CD4-positive, alpha-beta T cell (primary cell): ENCODE measurements at regions of chr3 and their contacts with region 1.

Region 1: DNA sequence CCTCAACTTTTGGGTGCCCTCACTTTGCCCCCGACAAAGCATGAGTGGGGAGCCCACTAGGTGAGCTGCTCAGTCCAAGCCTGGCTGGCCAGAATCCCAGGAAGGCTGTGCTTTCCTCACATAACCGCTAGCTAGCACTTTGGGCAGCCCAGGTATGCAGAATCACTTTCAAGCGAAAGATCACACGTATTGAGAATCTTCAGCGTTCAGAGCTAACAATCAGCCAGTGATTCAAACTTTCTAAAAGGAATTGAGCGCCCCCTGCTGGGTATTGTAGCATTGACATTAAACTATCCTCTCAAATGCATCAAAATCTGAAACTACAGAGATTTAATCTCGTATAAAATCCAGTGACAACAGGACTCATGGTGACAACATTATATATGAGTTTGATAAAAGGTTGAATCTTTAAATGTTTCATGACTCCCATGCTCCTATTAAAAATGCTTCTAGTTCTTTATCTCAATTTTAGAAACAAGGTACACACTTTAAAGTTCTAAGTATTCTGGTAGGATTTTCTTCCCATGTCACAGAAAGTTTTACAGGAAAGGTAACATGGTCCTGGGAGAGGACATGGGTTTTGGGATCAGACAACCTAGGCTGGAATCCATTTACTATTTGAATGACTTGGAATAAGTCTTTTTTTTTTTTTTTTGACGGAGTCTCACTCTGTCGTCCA is 11.8 kb downstream of the ANAPC13 start:
- DNase-seq: peak; percentile 45 to 89 (median 72)
- ATAC-seq: peak; percentile 85
- H3K4me3 ChIP-seq: no peak overlapping the region
- H3K4me3 Mint-ChIP-seq: no peak overlapping the region
- H3K27ac ChIP-seq: no peak overlapping the region
- H3K27ac Mint-ChIP-seq: no peak overlapping the region
- H3K4me1 ChIP-seq: peaks cover 4% of the 10 kb centered on the region
- H3K4me1 Mint-ChIP-seq: peaks cover 7% of the 10 kb centered on the region
- H3K27me3 ChIP-seq: no peaks in the 10 kb centered on the region
- H3K27me3 Mint-ChIP-seq: no peaks in the 10 kb centered on the region
- CTCF ChIP-seq: peak; percentile 92

Region 2: GRCh38 chr3:133812872-133813271 is 661.1 kb before region 1 on chr3:
- CTCF ChIA-PET with region 1: no interaction called
- POLR2A ChIA-PET with region 1: no interaction called
- intact Hi-C with region 1: loop called (anchors 5 to 10 kb)
- DNase-seq: no peak
- ATAC-seq: no peak
- H3K4me3 ChIP-seq: no peak overlapping the region
- H3K4me3 Mint-ChIP-seq: no peak overlapping the region
- H3K27ac ChIP-seq: no peak overlapping the region
- H3K27ac Mint-ChIP-seq: no peak overlapping the region
- H3K4me1 ChIP-seq: no peaks in the 10 kb centered on the region
- H3K4me1 Mint-ChIP-seq: peaks cover 39% of the 10 kb centered on the region
- H3K27me3 ChIP-seq: no peaks in the 10 kb centered on the region
- H3K27me3 Mint-ChIP-seq: no peaks in the 10 kb centered on the region
- CTCF ChIP-seq: no peak

Region 3: DNA sequence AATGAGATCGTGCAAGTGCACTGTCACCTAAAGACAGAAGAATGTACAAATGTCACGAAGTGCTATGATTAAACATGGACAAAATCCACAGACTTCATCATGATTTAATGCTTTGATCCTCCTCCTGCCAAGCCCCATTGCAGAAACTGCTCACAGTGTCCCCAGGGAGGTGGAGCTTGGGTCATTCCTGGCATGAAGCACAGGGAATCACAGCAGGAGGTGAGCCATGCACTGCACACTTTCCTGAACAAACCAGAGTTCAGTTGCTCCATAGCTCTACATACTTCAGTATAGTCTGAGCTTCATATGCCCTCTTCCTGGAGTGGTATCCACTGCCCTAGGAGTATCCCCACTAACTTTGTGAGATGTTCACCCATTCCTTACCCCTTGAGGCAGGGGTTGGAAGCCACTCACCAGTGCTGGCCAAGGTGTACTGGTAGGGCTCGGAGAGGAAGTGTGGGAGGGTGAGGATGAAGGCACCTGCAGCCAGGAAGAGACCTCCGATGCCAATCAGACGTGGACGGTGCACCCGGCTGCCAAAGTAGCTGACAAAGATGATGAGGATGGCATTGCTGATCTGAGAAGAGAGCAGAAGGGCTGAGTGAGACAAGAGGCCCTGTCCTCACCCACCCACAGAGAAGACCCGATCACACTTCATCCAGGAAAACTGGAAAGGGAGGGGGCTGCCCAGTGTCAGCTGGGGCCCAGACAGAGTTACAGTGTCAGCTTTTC is 500.6 kb before region 1 on chr3:
- CTCF ChIA-PET with region 1: no interaction called
- POLR2A ChIA-PET with region 1: no interaction called
- intact Hi-C with region 1: no loop called
- DNase-seq: no peak
- ATAC-seq: no peak
- H3K4me3 ChIP-seq: no peak overlapping the region
- H3K4me3 Mint-ChIP-seq: no peak overlapping the region
- H3K27ac ChIP-seq: no peak overlapping the region
- H3K27ac Mint-ChIP-seq: no peak overlapping the region
- H3K4me1 ChIP-seq: no peaks in the 10 kb centered on the region
- H3K4me1 Mint-ChIP-seq: no peaks in the 10 kb centered on the region
- H3K27me3 ChIP-seq: no peaks in the 10 kb centered on the region
- H3K27me3 Mint-ChIP-seq: no peaks in the 10 kb centered on the region
- CTCF ChIP-seq: no peak

Region 4: GRCh38 chr3:134197681-134198261 is 276.2 kb before region 1 on chr3:
- CTCF ChIA-PET with region 1: interaction called, 6 read pairs
- POLR2A ChIA-PET with region 1: no interaction called
- intact Hi-C with region 1: loop called (anchors 1 to 5 kb)
- DNase-seq: peak in 3 of 14 experiments; percentile 53 to 64 (median 63)
- ATAC-seq: peak; percentile 77
- H3K4me3 ChIP-seq: no peak overlapping the region
- H3K4me3 Mint-ChIP-seq: no peak overlapping the region
- H3K27ac ChIP-seq: no peak overlapping the region
- H3K27ac Mint-ChIP-seq: no peak overlapping the region
- H3K4me1 ChIP-seq: no peaks in the 10 kb centered on the region
- H3K4me1 Mint-ChIP-seq: peaks cover 6% of the 10 kb centered on the region
- H3K27me3 ChIP-seq: no peaks in the 10 kb centered on the region
- H3K27me3 Mint-ChIP-seq: no peaks in the 10 kb centered on the region
- CTCF ChIP-seq: peak; percentile 78

Region 5: DNA sequence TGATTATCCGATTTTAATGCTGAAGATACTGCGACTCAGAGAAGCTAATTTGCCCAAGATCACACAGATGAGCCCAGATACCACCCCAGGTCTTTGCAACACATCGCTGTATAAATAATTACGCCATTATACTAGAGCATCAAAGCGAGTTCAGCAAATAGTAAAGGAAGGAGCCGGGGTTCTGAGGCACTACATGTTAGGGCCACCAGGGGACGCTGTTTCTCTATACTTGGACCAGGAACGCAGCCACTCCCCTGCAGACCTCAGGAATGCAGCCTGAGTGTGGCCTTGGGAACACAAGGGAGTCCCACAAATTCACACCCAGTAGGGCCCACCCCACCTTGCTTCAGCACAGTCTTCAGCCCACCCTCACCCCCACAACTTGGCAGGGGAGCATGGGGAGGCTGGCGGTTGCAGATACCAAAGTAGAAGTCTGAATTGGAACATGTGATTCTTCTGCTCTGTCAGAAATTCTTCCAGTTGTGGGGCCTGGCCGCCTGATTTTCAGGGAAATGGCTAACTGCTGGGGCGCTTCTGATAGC is 165.6 kb before region 1 on chr3:
- CTCF ChIA-PET with region 1: interaction called, 12 read pairs
- POLR2A ChIA-PET with region 1: no interaction called
- intact Hi-C with region 1: loop called (anchors 1 kb)
- DNase-seq: peak; percentile 53 to 86 (median 71)
- ATAC-seq: peak; percentile 96
- H3K4me3 ChIP-seq: no peak overlapping the region
- H3K4me3 Mint-ChIP-seq: no peak overlapping the region
- H3K27ac ChIP-seq: no peak overlapping the region
- H3K27ac Mint-ChIP-seq: no peak overlapping the region
- H3K4me1 ChIP-seq: peaks cover 14% of the 10 kb centered on the region
- H3K4me1 Mint-ChIP-seq: peaks cover 5% of the 10 kb centered on the region
- H3K27me3 ChIP-seq: peaks cover 8 to 12% of the 10 kb centered on the region in 2 experiments
- H3K27me3 Mint-ChIP-seq: peaks cover 35% of the 10 kb centered on the region
- CTCF ChIP-seq: peak; percentile 98

Region 6: DNA sequence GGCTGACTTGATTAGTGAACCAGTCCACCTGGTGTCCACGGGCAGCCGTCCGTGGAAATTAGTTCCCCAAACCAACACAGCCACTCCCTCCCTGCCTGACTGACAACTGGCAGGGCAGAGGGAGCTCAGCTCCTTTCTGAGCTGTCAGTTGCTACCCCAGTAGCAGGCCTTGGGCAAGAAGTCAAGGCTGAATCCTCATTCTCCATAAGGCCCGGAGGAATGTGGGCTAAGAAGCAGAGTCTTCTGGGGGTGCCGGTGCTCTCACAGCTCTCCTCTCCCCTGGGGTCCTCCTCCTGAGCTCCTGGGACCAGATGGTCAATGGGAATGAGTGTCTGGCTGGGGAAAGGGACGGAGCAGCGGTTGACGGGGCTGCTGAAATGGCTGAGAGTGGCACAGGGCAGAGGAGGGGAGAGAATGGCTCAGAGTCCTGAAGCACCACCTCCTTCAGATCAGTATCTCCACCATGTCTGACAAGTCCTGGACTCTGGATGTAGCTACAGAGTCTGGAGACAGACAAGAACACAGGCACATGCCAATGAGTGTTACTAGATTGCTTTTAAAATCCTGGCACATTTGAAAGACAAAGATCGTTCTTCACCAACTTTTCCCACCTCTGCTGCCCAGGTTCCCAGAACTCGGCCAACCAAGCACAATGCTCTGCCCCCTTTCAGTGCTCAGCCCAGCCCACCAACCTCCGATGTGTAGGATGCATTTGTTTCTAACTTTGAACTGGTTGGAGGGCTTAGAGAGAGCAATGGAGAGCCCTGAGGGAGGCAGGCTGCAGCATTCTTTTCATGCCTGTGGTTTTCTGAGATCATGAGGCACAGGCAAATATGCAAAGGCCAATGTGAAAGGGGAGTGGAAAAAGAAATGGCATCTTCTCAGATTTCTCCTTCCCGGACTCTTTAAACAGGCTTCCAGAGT is 116.5 kb before region 1 on chr3:
- CTCF ChIA-PET with region 1: no interaction called
- POLR2A ChIA-PET with region 1: no interaction called
- intact Hi-C with region 1: loop called in 1 of 2 experiments (anchors 5 kb)
- DNase-seq: no peak
- ATAC-seq: no peak
- H3K4me3 ChIP-seq: no peak overlapping the region
- H3K4me3 Mint-ChIP-seq: no peak overlapping the region
- H3K27ac ChIP-seq: no peak overlapping the region
- H3K27ac Mint-ChIP-seq: no peak overlapping the region
- H3K4me1 ChIP-seq: no peaks in the 10 kb centered on the region
- H3K4me1 Mint-ChIP-seq: no peaks in the 10 kb centered on the region
- H3K27me3 ChIP-seq: no peaks in the 10 kb centered on the region
- H3K27me3 Mint-ChIP-seq: no peaks in the 10 kb centered on the region
- CTCF ChIP-seq: no peak

Region 7: DNA sequence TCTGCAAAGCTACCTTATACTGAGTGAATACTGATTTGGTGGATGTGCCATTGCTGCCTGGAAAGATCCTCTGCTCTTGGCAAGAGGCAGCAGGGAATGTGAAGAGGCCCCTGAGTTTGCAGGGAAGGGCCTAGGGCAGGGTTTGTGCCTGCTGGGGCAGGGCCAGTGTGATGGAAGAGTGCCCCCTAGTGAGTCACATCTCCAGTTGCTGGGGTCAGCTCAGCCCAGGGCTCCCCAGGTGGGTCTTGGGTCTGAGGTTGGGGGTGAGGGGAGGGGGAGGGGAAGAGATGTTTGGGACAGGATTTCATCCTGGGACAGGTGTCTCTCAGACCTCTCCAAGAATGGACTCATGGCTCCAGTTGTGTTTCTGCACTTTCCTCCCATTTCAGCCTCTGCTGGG is 95.6 kb before region 1 on chr3:
- CTCF ChIA-PET with region 1: no interaction called
- POLR2A ChIA-PET with region 1: interaction called, 3 read pairs
- intact Hi-C with region 1: loop called in 1 of 2 experiments (anchors 5 kb)
- DNase-seq: peak in 7 of 14 experiments; percentile 10 to 65 (median 49)
- ATAC-seq: no peak
- H3K4me3 ChIP-seq: no peak overlapping the region
- H3K4me3 Mint-ChIP-seq: no peak overlapping the region
- H3K27ac ChIP-seq: no peak overlapping the region
- H3K27ac Mint-ChIP-seq: no peak overlapping the region
- H3K4me1 ChIP-seq: peaks cover 15% of the 10 kb centered on the region
- H3K4me1 Mint-ChIP-seq: peaks cover 12% of the 10 kb centered on the region
- H3K27me3 ChIP-seq: peaks cover 18 to 23% of the 10 kb centered on the region in 2 experiments
- H3K27me3 Mint-ChIP-seq: peaks cover 43% of the 10 kb centered on the region
- CTCF ChIP-seq: no peak

Region 8: GRCh38 chr3:134432236-134432635 is 41.8 kb before region 1 on chr3:
- CTCF ChIA-PET with region 1: no interaction called
- POLR2A ChIA-PET with region 1: no interaction called
- intact Hi-C with region 1: no loop called
- DNase-seq: no peak
- ATAC-seq: no peak
- H3K4me3 ChIP-seq: no peak overlapping the region
- H3K4me3 Mint-ChIP-seq: no peak overlapping the region
- H3K27ac ChIP-seq: no peak overlapping the region
- H3K27ac Mint-ChIP-seq: no peak overlapping the region
- H3K4me1 ChIP-seq: no peaks in the 10 kb centered on the region
- H3K4me1 Mint-ChIP-seq: no peaks in the 10 kb centered on the region
- H3K27me3 ChIP-seq: peaks cover 2 to 10% of the 10 kb centered on the region in 2 experiments
- H3K27me3 Mint-ChIP-seq: peaks cover 34% of the 10 kb centered on the region
- CTCF ChIP-seq: no peak

Region 9: DNA sequence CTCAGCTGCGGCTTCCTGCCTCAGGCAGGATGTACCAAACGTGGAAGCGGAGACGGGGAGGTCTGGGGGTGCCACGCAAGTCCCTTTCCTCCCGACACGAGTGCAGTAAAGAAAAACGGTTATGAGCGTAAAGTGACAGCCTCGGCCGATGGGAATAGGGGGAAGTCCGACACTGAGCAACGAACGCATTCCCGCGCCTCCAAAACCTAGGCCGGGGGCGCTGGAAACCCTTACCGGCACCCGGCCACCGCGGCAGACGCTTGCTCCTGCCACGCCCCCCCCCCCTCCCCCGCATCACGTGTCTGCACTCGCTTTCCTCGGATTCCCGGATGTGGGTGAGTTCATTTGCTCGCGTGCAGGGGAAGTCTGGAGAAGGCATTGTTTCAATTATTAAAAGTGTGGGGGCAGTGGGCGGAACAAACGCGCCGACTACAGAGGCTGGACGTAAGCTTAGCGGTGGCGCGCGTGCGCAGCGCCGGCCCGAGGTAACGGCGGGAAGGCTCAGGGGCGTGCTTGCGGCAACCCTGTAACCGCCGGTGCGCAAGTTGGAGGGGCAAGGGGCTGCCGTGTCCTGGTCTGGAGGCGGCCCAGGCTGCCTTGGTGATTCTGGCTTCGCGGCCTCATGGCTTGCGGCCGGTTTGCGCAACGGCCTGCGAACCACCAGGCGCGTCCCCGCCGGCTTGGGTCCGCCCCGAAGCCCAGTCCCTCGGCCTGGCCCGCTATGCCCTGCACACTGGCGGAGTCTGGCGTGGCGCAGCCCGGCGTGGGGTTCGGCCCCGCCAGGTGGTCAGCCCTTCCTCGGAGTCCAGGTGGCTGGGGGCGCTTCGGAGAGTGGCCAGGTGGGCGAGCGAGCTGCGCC is 11.9 kb after region 1 on chr3 and contains the starts of genes ANAPC13 and CEP63:
- CTCF ChIA-PET with region 1: interaction called, 11 read pairs
- POLR2A ChIA-PET with region 1: interaction called, 12 read pairs
- intact Hi-C with region 1: no loop called
- DNase-seq: peak; percentile 84 to 99 (median 90)
- ATAC-seq: peak; percentile 76
- H3K4me3 ChIP-seq: peak within 1 kb of the TSS; percentile 96
- H3K4me3 Mint-ChIP-seq: peak within 1 kb of the TSS; percentile 100
- H3K27ac ChIP-seq: peak within 1 kb of the TSS; percentile 86 to 95
- H3K27ac Mint-ChIP-seq: peak within 1 kb of the TSS; percentile 98
- H3K4me1 ChIP-seq: peaks cover 29% of the 10 kb centered on the region
- H3K4me1 Mint-ChIP-seq: peaks cover 71% of the 10 kb centered on the region
- H3K27me3 ChIP-seq: no peaks in the 10 kb centered on the region
- H3K27me3 Mint-ChIP-seq: no peaks in the 10 kb centered on the region
- CTCF ChIP-seq: no peak
- total RNA-seq, gene ANAPC13: 12.9 to 16.8 TPM
- total RNA-seq, gene CEP63: 13.2 to 15.1 TPM

Region 10: GRCh38 chr3:134697830-134698689 is 224.1 kb after region 1 on chr3:
- CTCF ChIA-PET with region 1: no interaction called
- POLR2A ChIA-PET with region 1: no interaction called
- intact Hi-C with region 1: no loop called
- DNase-seq: no peak
- ATAC-seq: no peak
- H3K4me3 ChIP-seq: no peak overlapping the region
- H3K4me3 Mint-ChIP-seq: no peak overlapping the region
- H3K27ac ChIP-seq: no peak overlapping the region
- H3K27ac Mint-ChIP-seq: no peak overlapping the region
- H3K4me1 ChIP-seq: no peaks in the 10 kb centered on the region
- H3K4me1 Mint-ChIP-seq: no peaks in the 10 kb centered on the region
- H3K27me3 ChIP-seq: no peaks in the 10 kb centered on the region
- H3K27me3 Mint-ChIP-seq: peaks cover 9% of the 10 kb centered on the region
- CTCF ChIP-seq: no peak

Region 11: DNA sequence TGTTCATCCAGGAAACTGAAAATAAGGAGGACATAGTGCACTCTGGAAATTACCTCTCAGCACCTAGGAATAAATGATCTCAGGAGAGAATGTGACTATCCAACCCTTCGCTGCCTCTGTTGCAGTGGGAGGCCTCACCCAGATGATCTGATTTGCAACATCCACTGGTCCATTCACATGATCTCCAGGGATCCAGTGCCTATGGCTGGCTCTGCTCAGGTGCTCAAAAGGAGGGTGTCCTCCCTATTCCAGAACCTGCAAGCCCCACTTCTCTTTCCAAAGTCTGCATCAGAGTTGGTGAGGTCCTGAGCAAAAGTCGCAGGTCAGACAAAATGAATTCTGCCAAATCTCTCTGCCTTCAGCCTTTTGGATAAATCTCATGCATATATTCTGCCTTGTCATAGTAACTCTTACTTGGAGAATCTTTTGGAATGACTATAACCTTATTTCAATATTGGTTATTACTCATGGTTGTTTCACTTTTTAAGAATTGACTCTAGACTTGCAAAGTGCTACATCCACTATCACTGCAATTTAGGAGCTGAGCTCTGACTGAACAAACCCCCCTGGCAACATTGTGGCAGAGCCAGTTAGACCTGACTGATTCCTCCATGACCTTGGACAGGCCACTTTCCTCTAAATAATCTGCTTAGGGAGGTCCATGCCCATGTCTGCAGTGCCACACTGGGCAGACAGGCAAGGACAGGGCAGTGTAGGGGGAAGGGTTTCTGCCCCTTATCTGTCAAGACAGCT is 616.2 kb after region 1 on chr3:
- CTCF ChIA-PET with region 1: no interaction called
- POLR2A ChIA-PET with region 1: no interaction called
- intact Hi-C with region 1: no loop called
- DNase-seq: no peak
- ATAC-seq: no peak
- H3K4me3 ChIP-seq: no peak overlapping the region
- H3K4me3 Mint-ChIP-seq: no peak overlapping the region
- H3K27ac ChIP-seq: no peak overlapping the region
- H3K27ac Mint-ChIP-seq: no peak overlapping the region
- H3K4me1 ChIP-seq: no peaks in the 10 kb centered on the region
- H3K4me1 Mint-ChIP-seq: no peaks in the 10 kb centered on the region
- H3K27me3 ChIP-seq: no peaks in the 10 kb centered on the region
- H3K27me3 Mint-ChIP-seq: no peaks in the 10 kb centered on the region
- CTCF ChIP-seq: no peak